CD8-positive, alpha-beta T cell (primary cell): ENCODE measurements at regions of chr14 and their contacts with region 1.

Region 1: GRCh38 chr14:65102441-65103149 is at the start of gene MAX:
- DNase-seq: peak; percentile 96 to 99 (median 98)
- ATAC-seq: peak; percentile 82
- H3K4me3 ChIP-seq: peak within 1 kb of the TSS; percentile 81 to 97
- H3K4me3 Mint-ChIP-seq: peak within 1 kb of the TSS; percentile 88
- H3K27ac ChIP-seq: peak within 1 kb of the TSS; percentile 91 to 95
- H3K27ac Mint-ChIP-seq: peak within 1 kb of the TSS; percentile 96
- H3K4me1 ChIP-seq: peaks cover 35% of the 10 kb centered on the region
- H3K4me1 Mint-ChIP-seq: peaks cover 41% of the 10 kb centered on the region
- H3K27me3 ChIP-seq: no peaks in the 10 kb centered on the region
- H3K27me3 Mint-ChIP-seq: no peaks in the 10 kb centered on the region
- CTCF ChIP-seq: no peak
- total RNA-seq, gene MAX: 143 to 153 TPM

Region 2: GRCh38 chr14:63641473-63642228 is 1460.9 kb before region 1 on chr14 and contains the start of gene WDR89:
- CTCF ChIA-PET with region 1: no interaction called
- POLR2A ChIA-PET with region 1: no interaction called
- intact Hi-C with region 1: loop called in 1 of 2 experiments (anchors 5 kb)
- DNase-seq: peak; percentile 91 to 100 (median 94)
- ATAC-seq: peak; percentile 85
- H3K4me3 ChIP-seq: peak within 1 kb of the TSS; percentile 85 to 89
- H3K4me3 Mint-ChIP-seq: peak within 1 kb of the TSS; percentile 87
- H3K27ac ChIP-seq: peak within 1 kb of the TSS; percentile 94 to 99
- H3K27ac Mint-ChIP-seq: peak within 1 kb of the TSS; percentile 96
- H3K4me1 ChIP-seq: peaks cover 30% of the 10 kb centered on the region
- H3K4me1 Mint-ChIP-seq: peaks cover 57% of the 10 kb centered on the region
- H3K27me3 ChIP-seq: no peaks in the 10 kb centered on the region
- H3K27me3 Mint-ChIP-seq: no peaks in the 10 kb centered on the region
- CTCF ChIP-seq: peak; percentile 72
- total RNA-seq, gene WDR89: 13.6 to 13.7 TPM

Region 3: DNA sequence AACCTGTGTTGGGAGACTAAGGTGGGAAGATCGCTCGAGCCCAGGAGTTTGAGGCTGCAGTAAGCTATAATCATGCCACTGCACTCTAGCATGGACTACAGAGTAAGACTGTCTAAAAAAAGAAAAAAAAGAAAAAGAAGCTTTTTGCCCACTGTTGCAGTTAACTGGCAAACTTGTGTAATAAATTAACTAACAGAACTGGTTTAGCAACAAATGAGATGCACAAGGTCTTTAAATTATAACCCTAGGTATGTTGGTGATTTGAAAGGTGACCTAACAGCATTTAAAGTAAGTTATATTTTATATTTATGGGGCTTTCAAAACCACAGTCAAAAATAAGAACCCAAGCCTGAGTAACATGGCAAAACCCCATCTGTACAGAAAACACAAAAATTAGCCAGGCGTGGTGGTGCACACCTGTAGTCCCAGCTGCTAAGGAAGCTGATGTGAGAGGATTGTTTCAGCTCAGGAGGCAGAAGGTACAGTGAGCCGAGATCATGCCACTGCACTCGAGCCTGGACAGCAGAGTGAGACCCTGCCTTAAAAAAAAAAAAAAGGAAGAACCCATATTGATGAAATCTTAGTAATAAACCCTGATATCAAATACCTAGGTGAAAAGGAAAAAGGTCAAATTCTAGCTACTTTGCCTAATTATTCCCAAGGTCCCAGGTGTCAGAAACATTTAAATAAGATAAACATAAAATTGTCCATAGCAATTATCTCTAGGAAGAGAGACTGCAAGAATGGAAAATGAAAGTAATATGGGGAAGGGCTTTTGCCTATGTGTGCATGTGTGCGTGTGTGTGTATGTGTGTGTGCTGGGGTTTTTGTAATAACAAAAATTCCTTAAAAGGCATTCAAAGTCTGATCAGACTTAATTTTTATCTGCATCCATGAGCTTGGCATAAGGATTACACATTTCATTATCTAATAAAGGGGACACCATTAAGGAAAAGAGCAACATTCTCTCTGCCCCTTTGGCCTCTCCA is 1234.4 kb before region 1 on chr14:
- CTCF ChIA-PET with region 1: no interaction called
- POLR2A ChIA-PET with region 1: no interaction called
- intact Hi-C with region 1: loop called in 1 of 2 experiments (anchors 10 kb)
- DNase-seq: peak in 3 of 9 experiments; percentile 34 to 69 (median 50)
- ATAC-seq: no peak
- H3K4me3 ChIP-seq: no peak overlapping the region
- H3K4me3 Mint-ChIP-seq: peak overlapping the region; percentile 52
- H3K27ac ChIP-seq: peak overlapping the region; percentile 21 to 31
- H3K27ac Mint-ChIP-seq: peak overlapping the region; percentile 76
- H3K4me1 ChIP-seq: peaks cover 46% of the 10 kb centered on the region
- H3K4me1 Mint-ChIP-seq: peaks cover 63% of the 10 kb centered on the region
- H3K27me3 ChIP-seq: no peaks in the 10 kb centered on the region
- H3K27me3 Mint-ChIP-seq: no peaks in the 10 kb centered on the region
- CTCF ChIP-seq: no peak

Region 4: DNA sequence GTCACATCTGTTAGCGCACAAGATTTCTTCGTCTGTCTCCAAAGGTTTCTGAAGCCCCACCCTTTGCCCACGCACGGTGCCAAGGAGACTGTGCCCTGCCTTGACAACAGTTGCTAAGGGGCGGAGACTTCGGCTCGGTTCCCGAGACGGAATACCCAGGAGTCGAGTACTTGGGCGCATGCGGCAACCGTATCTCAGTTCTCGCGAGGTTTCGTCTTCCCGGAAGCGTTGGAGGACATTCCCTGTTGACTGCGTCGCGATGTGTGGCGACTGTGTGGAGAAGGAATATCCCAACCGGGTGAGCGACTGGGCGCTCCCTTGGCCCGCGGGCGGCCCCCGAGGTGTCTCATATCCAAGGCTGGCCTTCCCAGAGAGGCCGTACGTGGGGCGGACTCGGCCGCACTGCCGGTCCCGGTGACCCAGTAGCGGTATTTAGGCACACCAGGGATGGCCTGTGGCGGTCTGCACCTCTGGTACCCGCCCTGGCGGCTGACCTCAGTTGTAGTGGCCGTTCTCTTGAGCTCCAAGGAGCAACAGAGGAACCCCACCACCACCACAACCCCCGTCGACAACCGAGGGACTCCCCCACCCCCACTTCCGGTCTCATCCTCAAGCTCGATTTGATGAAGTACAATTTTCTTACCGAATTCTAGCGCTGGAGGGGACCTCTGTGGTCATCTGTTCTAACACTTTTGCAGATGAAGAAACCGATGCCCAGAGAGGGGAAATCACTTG is 188.2 kb before region 1 on chr14 and contains the start of gene CHURC1:
- CTCF ChIA-PET with region 1: no interaction called
- POLR2A ChIA-PET with region 1: no interaction called
- intact Hi-C with region 1: loop called (anchors 1 to 2 kb)
- DNase-seq: peak; percentile 91 to 99 (median 97)
- ATAC-seq: peak; percentile 92
- H3K4me3 ChIP-seq: peak within 1 kb of the TSS; percentile 86 to 98
- H3K4me3 Mint-ChIP-seq: peak within 1 kb of the TSS; percentile 85
- H3K27ac ChIP-seq: peak within 1 kb of the TSS; percentile 98 to 99
- H3K27ac Mint-ChIP-seq: peak within 1 kb of the TSS; percentile 91
- H3K4me1 ChIP-seq: peaks cover 42% of the 10 kb centered on the region
- H3K4me1 Mint-ChIP-seq: peaks cover 47% of the 10 kb centered on the region
- H3K27me3 ChIP-seq: no peaks in the 10 kb centered on the region
- H3K27me3 Mint-ChIP-seq: no peaks in the 10 kb centered on the region
- CTCF ChIP-seq: no peak
- total RNA-seq, gene CHURC1: 43.9 to 46.7 TPM

Region 5: GRCh38 chr14:65287264-65288131 is 184.9 kb after region 1 on chr14:
- CTCF ChIA-PET with region 1: no interaction called
- POLR2A ChIA-PET with region 1: interaction called, 3 read pairs
- intact Hi-C with region 1: loop called (anchors 5 to 10 kb)
- DNase-seq: peak in 8 of 9 experiments; percentile 34 to 83 (median 52)
- ATAC-seq: peak; percentile 77
- H3K4me3 ChIP-seq: peak overlapping the region; percentile 26 to 28
- H3K4me3 Mint-ChIP-seq: peak overlapping the region; percentile 80
- H3K27ac ChIP-seq: peak overlapping the region; percentile 52 to 78
- H3K27ac Mint-ChIP-seq: peak overlapping the region; percentile 99
- H3K4me1 ChIP-seq: peaks cover 70% of the 10 kb centered on the region
- H3K4me1 Mint-ChIP-seq: peaks cover 74% of the 10 kb centered on the region
- H3K27me3 ChIP-seq: no peaks in the 10 kb centered on the region
- H3K27me3 Mint-ChIP-seq: no peaks in the 10 kb centered on the region
- CTCF ChIP-seq: no peak

Region 6: DNA sequence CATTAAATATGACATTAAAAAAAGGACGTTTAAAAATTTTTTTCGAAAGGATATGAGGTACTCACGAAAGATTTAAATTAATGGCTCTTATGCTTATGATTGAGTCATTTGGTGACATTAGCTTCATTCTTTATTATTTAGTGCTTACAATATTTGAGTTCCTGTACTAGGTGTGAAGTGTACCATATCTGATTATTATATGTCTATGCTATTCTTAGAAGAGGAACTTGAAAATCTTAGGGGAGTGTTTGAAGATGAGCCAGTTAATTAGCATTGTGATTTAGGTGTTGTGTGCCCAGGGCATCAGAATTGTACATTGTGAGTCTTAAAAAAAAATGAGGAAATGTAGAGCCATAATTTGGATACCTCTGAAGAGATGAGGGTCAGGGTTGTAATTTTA is 428.6 kb after region 1 on chr14:
- CTCF ChIA-PET with region 1: no interaction called
- POLR2A ChIA-PET with region 1: no interaction called
- intact Hi-C with region 1: no loop called
- DNase-seq: no peak
- ATAC-seq: no peak
- H3K4me3 ChIP-seq: no peak overlapping the region
- H3K4me3 Mint-ChIP-seq: no peak overlapping the region
- H3K27ac ChIP-seq: no peak overlapping the region
- H3K27ac Mint-ChIP-seq: no peak overlapping the region
- H3K4me1 ChIP-seq: no peaks in the 10 kb centered on the region
- H3K4me1 Mint-ChIP-seq: peaks cover 20% of the 10 kb centered on the region
- H3K27me3 ChIP-seq: no peaks in the 10 kb centered on the region
- H3K27me3 Mint-ChIP-seq: no peaks in the 10 kb centered on the region
- CTCF ChIP-seq: no peak